CD4-positive, alpha-beta memory T cell (primary cell): ENCODE measurements at regions of chr5 and their contacts with region 1.

Region 1: GRCh38 chr5:178859625-178860531 is at the start of gene ZNF354B:
- DNase-seq: peak; percentile 82 to 90 (median 85)
- H3K4me3 ChIP-seq: peak within 1 kb of the TSS; percentile 48 to 66
- H3K4me3 Mint-ChIP-seq: peak within 1 kb of the TSS; percentile 89 to 97 (median 94)
- H3K27ac ChIP-seq: peak within 1 kb of the TSS; percentile 40
- H3K27ac Mint-ChIP-seq: peak within 1 kb of the TSS; percentile 85 to 95 (median 92)
- H3K4me1 ChIP-seq: peaks cover 22% of the 10 kb centered on the region
- H3K4me1 Mint-ChIP-seq: peaks cover 18 to 33% (median 25%) of the 10 kb centered on the region in 4 donors
- H3K27me3 ChIP-seq: no peaks in the 10 kb centered on the region
- H3K27me3 Mint-ChIP-seq: no peaks in the 10 kb centered on the region
- total RNA-seq, gene ZNF354B: 31.3 to 32.4 TPM

Region 2: DNA sequence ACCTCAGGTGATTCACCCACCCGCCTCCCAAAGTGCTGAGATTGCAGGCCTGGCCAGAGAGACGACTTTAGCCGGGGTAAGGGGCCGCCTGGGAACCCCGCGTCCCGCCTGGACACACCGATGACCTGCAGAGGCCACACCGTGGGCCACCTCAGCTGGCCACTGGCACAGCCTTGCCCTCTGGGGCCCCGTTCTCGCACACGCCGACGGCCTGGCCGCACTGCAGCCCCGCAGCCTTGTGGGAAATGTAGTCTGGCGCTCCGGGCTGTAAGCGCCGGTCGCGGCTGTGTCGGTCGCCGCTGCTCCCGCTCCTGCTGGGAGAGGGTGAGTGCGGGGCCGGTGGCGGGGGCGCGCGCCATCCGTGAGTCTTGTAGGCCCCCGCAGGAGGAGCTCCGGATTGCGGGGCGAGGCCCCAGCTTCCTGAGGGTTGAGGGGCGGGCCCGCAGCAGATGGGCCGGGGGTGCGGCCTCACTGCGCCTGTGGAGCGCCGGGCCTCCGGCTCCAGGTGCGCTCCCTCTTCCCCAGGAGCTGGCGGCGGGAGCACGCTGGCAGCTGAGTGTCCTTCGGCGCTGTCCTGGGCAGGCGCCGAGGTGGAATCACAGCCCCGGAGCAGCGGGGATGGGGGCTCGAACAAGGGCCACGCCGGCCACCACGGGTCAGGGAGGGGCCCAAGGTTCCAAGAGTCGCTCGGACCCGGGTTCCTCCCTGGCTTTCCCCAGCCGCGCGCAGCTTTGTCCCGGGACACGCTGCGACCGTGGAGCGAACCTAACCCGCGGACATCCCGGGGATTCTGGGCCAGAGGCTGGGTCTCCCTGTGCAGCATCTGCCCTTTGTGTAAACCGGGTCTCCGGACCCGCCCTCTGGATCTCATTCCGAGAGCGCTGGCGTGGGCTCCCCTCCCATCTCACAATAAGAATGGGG is 36.0 kb after region 1 on chr5 and contains the start of gene ZFP2:
- CTCF ChIA-PET with region 1: interaction called, 3 read pairs
- POLR2A ChIA-PET with region 1: interaction called, 11 read pairs
- intact Hi-C with region 1: loop called (anchors 2 kb)
- DNase-seq: peak; percentile 12 to 40 (median 15)
- H3K4me3 ChIP-seq: peak within 1 kb of the TSS; percentile 6 to 51
- H3K4me3 Mint-ChIP-seq: peak within 1 kb of the TSS; percentile 77 to 92 (median 86)
- H3K27ac ChIP-seq: peak within 1 kb of the TSS; percentile 7
- H3K27ac Mint-ChIP-seq: peak within 1 kb of the TSS in 4 of 7 donors; percentile 22 to 90 (median 62)
- H3K4me1 ChIP-seq: peaks cover 6% of the 10 kb centered on the region
- H3K4me1 Mint-ChIP-seq: peaks cover 0 to 5% (median 2%) of the 10 kb centered on the region in 4 donors
- H3K27me3 ChIP-seq: no peaks in the 10 kb centered on the region
- H3K27me3 Mint-ChIP-seq: no peaks in the 10 kb centered on the region
- total RNA-seq, gene ZFP2: 2.2 to 2.4 TPM

Region 3: GRCh38 chr5:179023528-179024430 is 163.9 kb after region 1 on chr5 and contains the start of gene ZNF879:
- CTCF ChIA-PET with region 1: no interaction called
- POLR2A ChIA-PET with region 1: interaction called, 24 read pairs
- intact Hi-C with region 1: loop called (anchors 1 kb)
- DNase-seq: peak; percentile 93 to 95 (median 94)
- H3K4me3 ChIP-seq: peak within 1 kb of the TSS; percentile 54 to 61
- H3K4me3 Mint-ChIP-seq: peak within 1 kb of the TSS; percentile 92 to 99 (median 96)
- H3K27ac ChIP-seq: peak within 1 kb of the TSS; percentile 66
- H3K27ac Mint-ChIP-seq: peak within 1 kb of the TSS; percentile 82 to 95 (median 93)
- H3K4me1 ChIP-seq: peaks cover 13% of the 10 kb centered on the region
- H3K4me1 Mint-ChIP-seq: peaks cover 8 to 20% (median 11%) of the 10 kb centered on the region in 4 donors
- H3K27me3 ChIP-seq: no peaks in the 10 kb centered on the region
- H3K27me3 Mint-ChIP-seq: peaks cover 2 to 3% of the 10 kb centered on the region in 2 donors
- total RNA-seq, gene ZNF879: 15.9 to 16.3 TPM

Region 4: DNA sequence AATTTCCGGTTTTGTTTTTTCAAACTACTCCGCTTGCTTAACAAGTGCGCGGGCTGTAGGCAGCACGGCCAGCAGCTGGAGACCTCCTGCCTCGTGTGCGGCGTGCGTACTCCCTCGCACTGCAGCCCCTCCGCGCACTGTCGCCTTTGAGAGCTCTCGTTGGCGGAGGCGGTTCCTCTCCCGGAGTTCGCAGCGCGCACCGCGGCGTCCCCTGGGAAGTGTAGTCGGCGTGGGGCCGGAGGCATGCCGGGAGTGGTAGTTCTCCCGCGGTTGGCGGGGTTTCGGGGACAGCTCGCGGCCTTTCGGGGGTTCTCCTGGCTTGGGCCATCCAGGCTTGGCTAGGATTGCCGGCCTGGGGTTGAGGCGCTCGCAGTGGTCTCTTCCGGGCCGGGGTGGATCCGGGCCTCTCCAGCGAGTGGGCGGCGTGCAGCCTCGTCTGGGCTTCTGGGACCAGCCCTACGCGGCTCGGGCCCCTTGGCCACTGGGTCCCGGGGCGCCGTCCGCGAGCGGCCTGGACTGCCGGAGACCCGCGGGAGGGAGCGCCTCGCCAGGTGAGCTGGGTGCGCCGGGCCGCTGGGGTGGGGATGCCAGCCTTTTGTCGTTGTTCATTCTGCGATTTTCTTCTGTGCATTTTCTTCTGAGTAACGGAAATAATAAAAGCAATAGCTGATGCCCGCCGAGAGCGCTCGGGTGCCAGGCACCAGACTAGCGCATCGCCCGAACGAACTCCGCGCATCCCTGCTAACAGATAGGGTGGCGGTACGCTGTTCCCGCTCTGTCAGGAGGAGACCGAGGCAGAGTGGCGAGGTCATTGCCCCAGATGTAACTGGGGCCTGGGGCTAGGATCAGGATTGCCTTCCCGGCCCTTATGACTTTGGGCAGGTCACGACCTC is 200.5 kb after region 1 on chr5 and contains the start of gene ZNF354C:
- CTCF ChIA-PET with region 1: interaction called, 13 read pairs
- POLR2A ChIA-PET with region 1: interaction called, 32 read pairs
- intact Hi-C with region 1: loop called (anchors 1 kb)
- DNase-seq: peak; percentile 82 to 86 (median 84)
- H3K4me3 ChIP-seq: peak within 1 kb of the TSS; percentile 54 to 61
- H3K4me3 Mint-ChIP-seq: peak within 1 kb of the TSS; percentile 90 to 99 (median 94)
- H3K27ac ChIP-seq: peak within 1 kb of the TSS; percentile 70
- H3K27ac Mint-ChIP-seq: peak within 1 kb of the TSS; percentile 82 to 96 (median 94)
- H3K4me1 ChIP-seq: peaks cover 14% of the 10 kb centered on the region
- H3K4me1 Mint-ChIP-seq: peaks cover 14 to 36% (median 27%) of the 10 kb centered on the region in 4 donors
- H3K27me3 ChIP-seq: no peaks in the 10 kb centered on the region
- H3K27me3 Mint-ChIP-seq: peaks cover 0 to 1% of the 10 kb centered on the region in 2 donors
- total RNA-seq, gene ZNF354C: 11.2 to 11.3 TPM

Region 5: DNA sequence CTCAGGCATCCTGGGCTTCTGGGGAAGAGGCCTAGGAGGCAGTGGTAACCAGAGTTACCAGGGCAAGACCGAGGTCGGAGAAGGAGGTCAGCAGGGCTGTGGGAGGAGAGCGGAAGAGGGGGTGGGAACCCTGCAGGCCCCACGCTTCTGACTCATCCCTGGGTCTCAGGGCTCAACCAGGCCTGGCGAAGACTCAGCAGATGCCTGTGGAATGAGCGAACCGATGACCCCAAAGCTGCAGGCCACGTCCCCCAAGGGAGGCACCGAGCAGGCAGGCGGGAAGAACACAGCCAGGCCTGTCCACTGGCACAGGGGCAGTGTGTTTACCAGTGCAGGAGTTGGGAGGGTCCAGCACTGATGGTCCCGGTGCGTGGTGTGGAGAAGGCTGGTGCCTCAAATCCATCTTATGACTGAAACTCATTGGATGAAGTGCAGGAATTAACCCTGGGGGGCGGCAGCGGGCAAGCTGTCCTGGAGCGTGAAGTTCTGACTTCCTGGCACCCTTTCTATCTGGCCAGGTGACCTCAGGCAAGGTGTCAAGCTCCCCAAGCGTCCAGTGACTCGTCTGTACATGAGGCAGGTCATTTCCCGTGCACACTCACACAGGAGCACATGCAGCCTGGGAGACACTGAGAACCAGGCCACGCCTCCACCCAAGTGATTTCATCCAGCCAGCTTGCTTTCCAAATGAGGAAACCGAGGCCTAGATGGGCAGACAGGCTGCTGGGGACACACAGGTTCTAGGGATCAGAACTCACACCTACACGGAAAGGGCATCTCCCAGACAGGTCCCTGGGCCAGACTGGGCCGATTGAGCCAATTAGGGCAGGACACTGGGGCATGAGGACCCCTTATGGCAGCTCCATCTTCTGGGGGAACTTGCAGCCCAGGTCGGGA is 416.3 kb after region 1 on chr5:
- CTCF ChIA-PET with region 1: no interaction called
- POLR2A ChIA-PET with region 1: no interaction called
- intact Hi-C with region 1: no loop called
- DNase-seq: no peak
- H3K4me3 ChIP-seq: no peak overlapping the region
- H3K4me3 Mint-ChIP-seq: no peak overlapping the region
- H3K27ac ChIP-seq: no peak overlapping the region
- H3K27ac Mint-ChIP-seq: no peak overlapping the region
- H3K4me1 ChIP-seq: no peaks in the 10 kb centered on the region
- H3K4me1 Mint-ChIP-seq: no peaks in the 10 kb centered on the region
- H3K27me3 ChIP-seq: no peaks in the 10 kb centered on the region
- H3K27me3 Mint-ChIP-seq: no peaks in the 10 kb centered on the region

Region 6: GRCh38 chr5:179294891-179295772 is 435.3 kb after region 1 on chr5:
- CTCF ChIA-PET with region 1: no interaction called
- POLR2A ChIA-PET with region 1: no interaction called
- intact Hi-C with region 1: no loop called
- DNase-seq: no peak
- H3K4me3 ChIP-seq: no peak overlapping the region
- H3K4me3 Mint-ChIP-seq: no peak overlapping the region
- H3K27ac ChIP-seq: no peak overlapping the region
- H3K27ac Mint-ChIP-seq: no peak overlapping the region
- H3K4me1 ChIP-seq: no peaks in the 10 kb centered on the region
- H3K4me1 Mint-ChIP-seq: no peaks in the 10 kb centered on the region
- H3K27me3 ChIP-seq: no peaks in the 10 kb centered on the region
- H3K27me3 Mint-ChIP-seq: peaks cover 3 to 4% of the 10 kb centered on the region in 2 donors